Heart right ventricle (tissue), 16 donors: ENCODE measurements at regions of chr13 and their contacts with region 1.

Region 1: DNA sequence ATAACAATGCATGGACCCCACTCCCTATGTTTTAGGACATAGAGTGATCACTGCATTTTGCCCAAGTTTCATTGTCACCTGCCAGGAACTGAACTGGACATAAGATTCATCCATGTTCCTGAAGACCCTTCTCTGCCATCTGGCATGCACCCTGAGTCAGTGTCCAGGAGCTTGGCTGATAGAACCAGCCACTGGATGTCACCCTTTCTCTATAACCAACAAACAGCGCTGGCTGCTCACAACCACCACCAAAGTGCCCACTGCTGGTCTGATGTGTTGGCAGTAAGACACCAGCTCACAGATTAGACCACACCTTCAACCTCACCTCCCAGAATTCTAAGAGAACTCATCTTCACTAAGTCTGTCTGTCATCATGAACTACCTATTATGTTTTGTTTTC is 333.4 kb downstream of the ITGBL1 start:
- DNase-seq: peak; percentile 14 to 21
- ATAC-seq: peak; percentile 42 to 92 (median 81)
- H3K4me3 ChIP-seq: no peak overlapping the region
- H3K27ac ChIP-seq: no peak overlapping the region
- H3K4me1 ChIP-seq: no peaks in the 10 kb centered on the region
- H3K27me3 ChIP-seq: no peaks in the 10 kb centered on the region
- CTCF ChIP-seq: peak in 8 of 9 donors; percentile 19 to 62 (median 48)

Region 2: GRCh38 chr13:101556676-101557123 is 229.2 kb before region 1 on chr13:
- intact Hi-C with region 1: no loop called
- DNase-seq: no peak
- ATAC-seq: peak in 3 of 8 donors; percentile 12 to 73 (median 20)
- H3K4me3 ChIP-seq: no peak overlapping the region
- H3K27ac ChIP-seq: no peak overlapping the region
- H3K4me1 ChIP-seq: no peaks in the 10 kb centered on the region
- H3K27me3 ChIP-seq: no peaks in the 10 kb centered on the region
- CTCF ChIP-seq: no peak

Region 3: DNA sequence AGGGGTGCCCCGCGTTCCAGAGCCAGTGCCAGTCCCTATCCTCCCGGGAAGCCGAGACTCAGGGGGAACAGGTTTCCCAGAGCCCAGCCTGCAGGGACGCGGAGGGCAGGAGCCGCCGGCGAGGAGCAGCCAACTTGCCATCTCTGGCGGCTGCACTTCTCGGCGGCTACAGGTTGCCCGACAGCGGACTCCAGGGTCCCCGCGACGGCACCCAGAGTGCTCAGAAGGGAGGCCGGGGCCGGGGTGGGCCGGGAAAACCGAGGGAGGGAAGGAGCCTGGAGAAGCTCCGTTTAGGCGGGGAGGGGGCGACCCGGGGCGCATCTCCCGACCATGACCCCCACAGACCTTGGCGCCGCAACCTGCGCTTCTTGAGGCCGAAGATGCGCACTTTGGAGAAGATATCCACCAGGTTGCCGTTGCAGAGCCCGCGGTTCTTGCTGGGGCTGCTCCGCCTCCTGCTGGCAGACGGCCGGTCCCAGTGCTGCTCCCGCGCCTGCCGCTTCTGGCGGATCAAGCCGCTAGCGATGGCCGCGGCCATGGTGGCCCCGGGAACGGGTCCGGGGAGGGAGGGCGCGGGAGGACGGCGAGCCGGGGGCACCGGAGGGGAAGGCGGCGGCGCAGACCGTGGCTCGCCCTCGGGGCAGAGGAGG is 130.4 kb after region 1 on chr13:
- intact Hi-C with region 1: loop called (anchors 2 to 10 kb)
- DNase-seq: peak in 1 of 2 donors; percentile 40
- ATAC-seq: peak; percentile 25 to 92 (median 80)
- H3K4me3 ChIP-seq: peak overlapping the region; percentile 13 to 57 (median 48)
- H3K27ac ChIP-seq: no peak overlapping the region
- H3K4me1 ChIP-seq: peaks cover 0 to 20% (median 6%) of the 10 kb centered on the region in 9 donors
- H3K27me3 ChIP-seq: peaks cover 0 to 87% (median 68%) of the 10 kb centered on the region in 7 donors
- CTCF ChIP-seq: peak in 7 of 9 donors; percentile 29 to 60 (median 51)